SK-N-SH (cell line): ENCODE measurements at regions of chr6 and their contacts with region 1.

Region 1: GRCh38 chr6:160992061-160992979 is 751 bp downstream of the MAP3K4 start:
- DNase-seq: peak; percentile 70
- H3K4me3 ChIP-seq: peak overlapping the region; percentile 89 to 90
- H3K27ac ChIP-seq: peak overlapping the region; percentile 86 to 92
- H3K4me1 ChIP-seq: peaks cover 3 to 5% of the 10 kb centered on the region in 2 experiments; a peak in 3 of 4 replicates
- H3K27me3 ChIP-seq: no peaks in the 10 kb centered on the region
- CTCF ChIP-seq: peak; percentile 77
- EP300 ChIP-seq: no peak
- RAD21 ChIP-seq: peak; percentile 73

Region 2: DNA sequence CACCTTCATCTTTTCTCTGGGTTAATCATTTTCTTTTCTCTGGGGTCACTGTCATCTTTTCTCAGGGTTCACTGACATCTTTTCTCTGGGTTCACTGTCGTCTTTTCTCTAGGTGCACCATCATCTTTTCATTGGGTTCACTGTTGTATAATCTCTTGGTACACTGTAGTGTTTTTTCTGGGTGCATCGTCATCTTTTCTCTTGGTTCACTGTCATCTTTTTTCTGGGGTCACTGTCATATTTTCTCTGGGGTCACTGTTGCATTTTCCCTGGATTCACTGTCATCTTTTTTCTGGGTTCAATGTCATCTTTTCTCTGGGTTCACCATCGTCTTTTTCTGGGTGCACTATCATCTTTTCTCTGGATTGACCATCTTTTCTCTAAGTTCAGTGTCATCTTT is 146.6 kb before region 1 on chr6:
- CTCF ChIA-PET with region 1: no interaction called
- POLR2A ChIA-PET with region 1: no interaction called
- DNase-seq: no peak
- H3K4me3 ChIP-seq: no peak overlapping the region
- H3K27ac ChIP-seq: no peak overlapping the region
- H3K4me1 ChIP-seq: no peaks in the 10 kb centered on the region
- H3K27me3 ChIP-seq: no peaks in the 10 kb centered on the region
- CTCF ChIP-seq: no peak
- EP300 ChIP-seq: no peak
- RAD21 ChIP-seq: no peak

Region 3: DNA sequence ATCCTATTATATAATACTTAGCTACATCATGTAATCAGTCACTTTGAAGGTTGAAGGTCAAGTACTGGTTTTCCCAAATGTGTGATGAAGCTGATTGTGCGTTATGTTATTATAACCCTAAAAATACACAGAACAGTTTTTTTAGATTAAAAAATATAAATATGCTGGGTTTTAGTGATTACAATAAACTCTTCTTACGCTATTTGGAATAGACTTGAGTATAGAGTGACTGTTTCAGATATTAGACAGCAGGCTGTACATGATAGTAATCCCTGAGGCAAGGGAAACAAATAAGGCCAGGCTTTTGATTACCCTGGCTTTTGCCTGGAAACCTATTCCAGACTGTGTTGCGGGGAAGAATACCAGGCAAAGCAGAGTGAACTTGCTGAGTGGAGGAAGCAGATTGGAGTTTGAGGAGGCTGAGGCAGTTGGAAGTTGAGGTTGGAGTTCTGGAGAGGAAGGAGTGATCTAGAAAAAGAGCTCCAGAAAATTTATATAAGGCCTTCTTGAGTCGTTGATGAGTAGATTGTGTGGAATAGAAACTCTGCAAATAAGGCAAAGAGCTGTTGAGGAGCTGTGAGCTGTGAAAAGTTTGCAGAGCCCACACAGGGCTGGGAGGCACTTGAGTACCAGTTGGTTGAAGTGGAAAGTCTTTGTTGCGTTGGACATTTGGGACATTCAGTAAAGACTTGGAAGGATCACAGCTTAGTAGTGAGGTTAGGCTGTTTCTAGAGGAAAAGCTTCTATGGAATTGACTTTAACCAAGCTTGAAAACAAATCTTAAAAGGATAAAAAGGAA is 25.6 kb after region 1 on chr6:
- CTCF ChIA-PET with region 1: interaction called, 11 read pairs
- POLR2A ChIA-PET with region 1: no interaction called
- DNase-seq: no peak
- H3K4me3 ChIP-seq: no peak overlapping the region
- H3K27ac ChIP-seq: no peak overlapping the region
- H3K4me1 ChIP-seq: peaks cover 0 to 5% of the 10 kb centered on the region in 2 experiments; a peak in 1 of 4 replicates
- H3K27me3 ChIP-seq: no peaks in the 10 kb centered on the region
- CTCF ChIP-seq: no peak
- EP300 ChIP-seq: no peak
- RAD21 ChIP-seq: no peak